ENCODE measurements at regions of chrX and their contacts with region 1.

Region 1: GRCh38 chrX:70998411-70999027 is 67.6 kb upstream of the SLC7A3 start:
- DNase-seq: no peak
- CTCF ChIP-seq: peak; percentile 22

Region 2: DNA sequence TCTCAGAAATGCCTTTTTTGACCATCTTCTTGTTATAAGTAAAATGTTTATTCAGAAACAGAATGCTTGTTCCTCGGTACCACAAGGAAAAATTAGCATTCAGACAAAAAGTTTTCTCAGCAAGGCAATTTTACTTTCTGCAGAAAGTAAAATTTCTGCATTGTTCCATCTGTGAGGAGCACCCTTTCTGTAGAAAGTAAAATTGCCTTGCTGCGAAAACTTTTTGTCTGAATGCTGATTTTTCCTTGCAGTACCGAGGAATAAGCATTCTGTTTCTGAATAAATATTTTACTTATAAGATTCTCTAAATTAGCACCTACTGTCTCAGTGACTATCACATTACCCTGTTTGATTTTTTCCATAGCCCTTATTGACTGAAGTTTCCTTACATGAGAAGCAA is 327.9 kb after region 1 on chrX:
- in situ Hi-C with region 1: loop called (anchors 25 kb)
- DNase-seq: no peak
- CTCF ChIP-seq: no peak

Measured in GM13976 (cell line).